H1 (cell line): ENCODE measurements at regions of chr20 and their contacts with region 1.

Region 1: DNA sequence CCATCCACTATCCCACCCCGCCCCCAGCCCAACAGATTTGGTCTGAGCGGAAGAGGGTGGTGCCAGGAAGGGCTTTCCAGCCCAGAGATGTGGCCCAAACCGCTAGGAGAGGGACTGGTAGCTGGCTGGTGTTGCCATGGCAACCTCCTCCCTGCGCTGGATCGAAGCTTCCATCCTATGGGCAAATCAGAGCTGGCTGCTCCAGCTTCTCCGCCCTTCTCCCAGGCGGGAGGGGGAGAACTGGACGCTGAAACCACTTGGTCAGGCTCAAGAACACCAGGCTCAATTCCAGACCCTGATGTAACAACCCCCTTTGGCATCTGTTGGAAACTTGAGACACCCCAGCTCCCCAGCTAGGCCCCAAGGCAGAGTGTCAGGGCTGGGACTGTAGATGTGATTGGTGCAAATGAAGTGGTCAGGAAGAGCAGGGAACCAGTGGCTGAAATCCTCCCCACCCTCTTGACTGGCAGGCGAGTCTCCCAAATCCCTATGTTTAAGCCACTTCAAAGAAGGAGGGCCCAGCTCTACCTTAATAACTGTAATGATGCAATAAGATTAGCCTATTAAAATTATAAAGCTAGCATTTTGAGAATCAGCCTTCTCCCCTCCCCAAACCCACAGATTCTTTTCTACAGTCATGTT is 4.2 kb downstream of the RIMS4 start:
- DNase-seq: peak in 1 of 2 experiments; percentile 82
- H3K4me3 ChIP-seq: no peak overlapping the region
- H3K27ac ChIP-seq: no peak overlapping the region
- H3K4me1 ChIP-seq: peaks cover 0 to 10% (median 5%) of the 10 kb centered on the region in 4 experiments; a peak in 6 of 7 replicates
- H3K27me3 ChIP-seq: peaks cover 0 to 16% (median 11%) of the 10 kb centered on the region in 4 experiments; a peak in 6 of 7 replicates
- CTCF ChIP-seq: no peak
- EP300 ChIP-seq: no peak
- POLR2A ChIP-seq: no peak
- RAD21 ChIP-seq: no peak

Region 2: DNA sequence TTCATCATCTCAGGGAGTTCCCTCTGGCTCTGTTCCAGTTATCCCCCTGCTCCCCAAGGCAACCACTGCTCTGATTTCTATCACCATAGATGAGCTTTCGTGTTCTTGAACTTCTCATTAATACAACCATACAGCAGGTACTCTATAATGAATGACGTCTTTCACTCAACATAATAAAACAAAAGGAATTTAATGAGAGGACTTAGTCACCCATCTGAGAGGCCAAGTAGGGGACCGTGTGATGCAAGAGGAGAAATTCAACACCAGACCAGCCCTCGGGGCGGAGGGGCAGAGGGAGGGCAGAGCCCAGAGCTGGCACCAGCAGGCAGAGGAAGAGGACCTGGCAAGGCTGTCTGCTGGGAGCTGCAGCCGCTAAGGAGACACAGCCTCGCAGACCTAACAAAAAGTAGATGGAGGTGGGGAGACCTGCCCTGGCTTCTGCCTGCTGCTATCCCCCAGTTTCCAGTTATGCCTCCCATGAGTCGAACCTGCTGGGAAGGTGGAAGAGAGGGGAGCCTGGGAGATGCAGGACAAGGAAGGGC is 77.2 kb before region 1 on chr20:
- CTCF ChIA-PET with region 1: no interaction called
- POLR2A ChIA-PET with region 1: no interaction called
- DNase-seq: peak in 1 of 2 experiments; percentile 63
- H3K4me3 ChIP-seq: peak overlapping the region in 1 of 4 experiments; percentile 37; a peak in 1 of 8 replicates
- H3K27ac ChIP-seq: no peak overlapping the region
- H3K4me1 ChIP-seq: peaks cover 7 to 19% (median 15%) of the 10 kb centered on the region in 4 experiments
- H3K27me3 ChIP-seq: no peaks in the 10 kb centered on the region
- CTCF ChIP-seq: no peak
- EP300 ChIP-seq: no peak
- POLR2A ChIP-seq: no peak
- RAD21 ChIP-seq: no peak

Region 3: DNA sequence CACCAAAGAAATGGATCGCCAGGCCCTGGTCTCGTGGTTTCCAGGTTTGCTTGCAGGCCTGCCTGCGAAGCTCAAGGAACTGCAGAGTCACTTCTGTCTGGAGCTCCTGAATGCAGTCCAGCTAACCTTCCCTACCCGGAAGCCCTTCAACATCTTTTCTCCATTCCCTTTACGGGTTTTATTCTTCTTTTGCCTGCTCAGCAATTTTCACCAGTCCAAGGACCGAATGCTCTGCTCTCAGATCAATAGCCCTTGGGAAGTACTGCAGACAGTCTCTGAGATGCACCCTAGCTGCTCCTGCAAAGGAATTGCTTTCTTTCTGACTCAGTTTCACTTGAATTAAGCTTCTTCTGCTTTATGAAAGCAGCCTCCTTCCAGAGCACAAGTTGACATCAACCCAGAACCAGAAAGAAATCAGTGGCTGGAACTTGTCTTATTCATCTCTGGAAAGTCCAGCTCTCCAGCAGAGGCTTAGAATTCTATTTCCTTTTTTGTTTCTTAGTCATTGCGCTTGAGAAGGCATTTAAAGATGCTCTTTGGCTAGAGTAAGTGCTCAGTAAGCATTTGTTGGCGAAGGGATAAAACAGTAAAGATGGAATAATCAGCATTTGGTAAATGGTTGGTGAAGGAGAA is 60.7 kb after region 1 on chr20:
- CTCF ChIA-PET with region 1: interaction called, 43 read pairs
- POLR2A ChIA-PET with region 1: interaction called, 3 read pairs
- DNase-seq: no peak
- H3K4me3 ChIP-seq: no peak overlapping the region
- H3K27ac ChIP-seq: no peak overlapping the region
- H3K4me1 ChIP-seq: no peaks in the 10 kb centered on the region
- H3K27me3 ChIP-seq: no peaks in the 10 kb centered on the region
- CTCF ChIP-seq: no peak
- EP300 ChIP-seq: no peak
- POLR2A ChIP-seq: no peak
- RAD21 ChIP-seq: no peak